ENCODE measurements at regions of chr17 and their contacts with region 1.

Region 1: GRCh38 chr17:8894673-8895578 is 27.5 kb upstream of the PIK3R6 start:
- DNase-seq: peak; percentile 79
- CTCF ChIP-seq: peak; percentile 72

Region 2: DNA sequence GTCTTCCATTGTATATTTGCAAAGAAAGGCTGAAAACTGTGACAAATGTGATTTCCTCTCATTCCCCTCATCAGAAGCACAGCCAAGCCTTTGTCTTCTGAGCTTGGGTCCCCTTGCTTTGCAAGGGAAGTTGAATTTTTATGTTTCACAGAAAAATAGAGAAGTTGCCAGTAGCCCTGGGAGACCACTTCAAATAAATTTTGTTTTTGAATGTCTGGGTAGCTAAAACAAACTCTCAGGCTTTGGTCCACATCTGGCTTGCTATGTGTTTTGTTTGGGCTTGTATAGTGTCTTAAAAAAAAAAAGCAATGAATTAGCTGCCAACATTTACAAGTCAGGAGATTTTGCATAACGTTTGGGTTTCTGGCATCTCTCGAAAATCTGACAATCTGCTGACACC is 51.6 kb before region 1 on chr17:
- CTCF ChIA-PET with region 1: interaction called, 18 read pairs
- POLR2A ChIA-PET with region 1: no interaction called
- DNase-seq: no peak
- CTCF ChIP-seq: no peak

Region 3: GRCh38 chr17:8857919-8858318 is 37.0 kb before region 1 on chr17:
- CTCF ChIA-PET with region 1: interaction called, 15 read pairs
- POLR2A ChIA-PET with region 1: interaction called, 9 read pairs
- DNase-seq: peak; percentile 54
- CTCF ChIP-seq: no peak

Region 4: DNA sequence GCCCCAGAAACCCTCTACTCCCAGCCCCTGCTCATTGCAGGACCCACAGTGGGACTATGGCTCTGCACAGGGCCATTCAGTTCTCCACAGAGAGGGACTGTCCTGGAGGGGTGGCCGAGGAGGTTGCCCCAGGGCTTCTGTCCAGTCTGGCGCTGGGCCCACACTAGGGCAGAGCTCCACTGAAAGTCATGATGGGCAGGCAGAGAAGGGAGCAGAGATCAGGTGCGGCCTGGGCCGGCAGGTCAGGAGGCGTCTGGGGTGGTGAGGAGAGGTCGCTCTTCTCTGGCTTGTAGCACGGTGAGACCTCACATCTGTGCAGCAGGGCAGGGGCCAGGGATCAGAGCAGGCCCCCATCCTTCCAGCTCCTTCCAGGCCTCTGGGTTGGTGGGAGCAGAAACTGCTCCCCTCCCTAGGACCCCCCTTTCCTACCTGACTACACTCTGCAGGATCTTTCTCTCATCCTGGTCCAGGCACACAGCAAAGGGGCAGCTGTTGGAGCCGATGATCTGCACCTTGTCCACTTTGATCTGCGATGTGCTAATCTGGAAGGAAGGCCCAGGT is 14.4 kb before region 1 on chr17:
- CTCF ChIA-PET with region 1: interaction called, 15 read pairs
- POLR2A ChIA-PET with region 1: no interaction called
- DNase-seq: no peak
- CTCF ChIP-seq: no peak

Region 5: DNA sequence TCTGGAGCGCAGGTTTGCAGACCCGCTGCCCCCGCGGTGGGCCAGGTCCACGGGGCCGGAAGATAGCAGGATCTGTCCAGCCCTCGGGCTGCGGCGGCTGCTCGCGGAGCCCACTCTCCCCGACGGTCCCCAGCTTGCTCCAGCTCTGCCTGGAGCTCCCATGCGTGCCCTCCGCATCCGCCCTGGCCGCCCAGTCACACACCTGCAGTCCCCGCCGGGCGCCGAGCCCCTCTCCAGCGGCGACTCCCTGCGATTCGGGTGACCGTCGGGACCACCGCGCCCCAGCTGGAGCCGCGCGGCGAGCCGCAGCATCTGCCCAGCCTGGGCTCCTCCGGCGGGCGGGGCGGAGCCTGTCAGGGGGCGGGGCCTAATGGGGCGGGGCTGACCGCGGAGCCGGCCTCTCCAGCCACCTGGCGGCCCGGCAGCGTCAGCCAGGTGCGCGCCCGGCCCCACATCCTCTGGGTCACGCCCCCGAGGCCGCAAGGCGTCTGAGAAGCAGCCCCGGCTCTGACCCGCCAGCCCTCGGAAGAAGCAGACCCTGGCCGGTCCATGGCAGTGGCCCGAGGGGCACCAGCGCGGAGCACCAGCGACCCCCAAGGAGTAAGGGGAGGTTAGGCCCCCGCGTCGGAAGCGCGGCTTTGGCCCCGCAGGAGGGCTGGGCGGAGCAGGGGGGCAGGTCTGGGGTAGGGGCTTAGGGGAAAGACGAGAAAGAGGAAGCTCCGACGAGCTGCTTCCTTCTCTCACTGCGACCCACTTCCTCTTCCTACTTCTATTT is 70.7 kb after region 1 on chr17 and contains the start of gene PIK3R5:
- CTCF ChIA-PET with region 1: interaction called, 15 read pairs
- POLR2A ChIA-PET with region 1: interaction called, 3 read pairs
- DNase-seq: peak; percentile 93
- CTCF ChIP-seq: no peak